Activated CD4-positive, alpha-beta T cell treated with anti-CD3 and anti-CD28 coated beads, Interleukin-2, amount 10 ng/mL, durations not matched to agents 24 days and 14 days (primary cell): ENCODE measurements at regions of chr17 and their contacts with region 1.

Region 1: GRCh38 chr17:31842183-31843069 is 16.6 kb downstream of the COPRS start:
- DNase-seq: peak; percentile 90
- H3K4me3 Mint-ChIP-seq: no peak overlapping the region
- H3K27ac Mint-ChIP-seq: no peak overlapping the region
- H3K4me1 Mint-ChIP-seq: no peaks in the 10 kb centered on the region
- H3K27me3 Mint-ChIP-seq: peaks cover 17% of the 10 kb centered on the region

Region 2: DNA sequence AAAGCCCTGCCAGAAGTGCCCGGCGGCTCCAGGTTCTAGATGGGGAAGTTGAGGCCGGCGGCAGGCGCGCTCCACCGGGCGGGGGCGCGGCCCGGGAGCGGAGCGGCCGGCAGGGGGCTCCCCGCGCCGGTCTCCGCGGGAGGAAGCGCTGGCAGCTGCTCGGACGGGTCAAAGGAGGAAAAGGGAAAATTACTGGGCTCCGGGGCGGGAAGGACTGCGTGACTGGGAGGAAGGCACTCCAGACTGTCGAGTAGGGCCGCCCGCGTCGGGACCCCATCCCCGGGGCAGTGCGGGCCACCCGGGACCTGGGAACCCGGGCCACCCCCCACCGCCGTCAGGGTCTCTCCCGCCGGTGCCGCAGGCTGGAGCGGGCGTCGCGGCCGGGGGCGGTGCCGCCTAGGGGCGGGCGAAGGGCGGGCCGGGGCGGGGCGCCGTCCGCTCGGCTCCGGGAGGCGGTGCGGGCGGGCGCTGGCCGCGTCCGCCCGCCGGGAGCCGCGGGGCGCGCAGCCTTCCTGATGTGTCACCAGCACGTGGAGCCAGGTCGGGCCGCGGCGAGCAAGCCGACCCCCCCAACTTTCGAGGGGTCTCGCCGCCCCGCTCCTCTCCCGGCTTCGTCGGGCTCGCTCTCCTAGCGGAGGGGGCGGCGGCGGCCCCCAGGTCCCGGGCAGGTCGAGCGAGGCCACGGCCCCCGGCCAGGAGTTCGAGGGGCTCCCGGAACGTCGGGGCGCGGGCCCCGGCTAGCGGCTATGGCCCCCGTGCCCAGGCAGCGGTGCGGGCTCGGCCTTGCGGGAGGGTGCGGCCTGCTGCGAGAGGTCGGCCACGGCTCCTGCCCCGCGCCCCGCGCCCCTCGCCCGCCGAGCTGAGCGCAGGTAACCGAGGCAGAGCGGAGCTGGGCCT is 283.4 kb before region 1 on chr17:
- intact Hi-C with region 1: loop called (anchors 2 kb)
- DNase-seq: peak; percentile 86
- H3K4me3 Mint-ChIP-seq: peak overlapping the region; percentile 73
- H3K27ac Mint-ChIP-seq: no peak overlapping the region
- H3K4me1 Mint-ChIP-seq: peaks cover 18% of the 10 kb centered on the region
- H3K27me3 Mint-ChIP-seq: peaks cover 25% of the 10 kb centered on the region